ENCODE measurements at regions of chr12 and their contacts with region 1.

Region 1: DNA sequence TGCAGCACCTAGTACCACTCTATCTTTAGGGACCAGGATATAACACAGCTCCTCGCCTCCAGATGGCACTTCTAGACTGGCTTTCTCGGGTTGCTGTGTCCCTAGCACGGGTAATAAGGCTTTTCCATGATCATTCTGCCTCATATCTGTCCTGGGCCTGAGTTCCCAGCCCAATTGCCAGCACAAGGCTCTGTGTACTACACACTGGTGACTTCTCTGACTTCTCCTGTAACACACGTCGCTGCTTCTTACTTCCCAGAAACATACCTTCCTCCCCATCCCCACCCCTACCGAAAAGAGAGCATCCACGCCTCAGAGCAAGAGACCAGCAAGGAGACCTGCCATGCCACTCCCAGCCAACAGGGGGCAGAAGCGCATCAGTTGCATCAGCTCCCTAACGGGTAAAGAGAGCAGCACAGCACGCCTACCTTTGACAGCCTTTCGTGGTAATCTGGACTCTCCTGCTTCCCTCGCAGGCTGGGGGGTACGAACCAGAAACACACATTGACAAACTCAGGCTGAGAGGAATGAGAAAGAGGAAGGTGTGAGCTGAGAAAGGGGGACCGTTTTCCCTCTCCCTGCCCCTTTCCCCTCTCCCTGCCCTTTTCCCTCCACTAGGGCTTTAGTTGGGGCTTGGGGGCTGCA is 21.2 kb upstream of the ZNF740 start:
- DNase-seq: peak; percentile 97
- H3K4me3 Mint-ChIP-seq: peak overlapping the region; percentile 8
- H3K27ac Mint-ChIP-seq: peak overlapping the region; percentile 38
- H3K4me1 Mint-ChIP-seq: peaks cover 9% of the 10 kb centered on the region
- H3K27me3 Mint-ChIP-seq: no peaks in the 10 kb centered on the region

Region 2: DNA sequence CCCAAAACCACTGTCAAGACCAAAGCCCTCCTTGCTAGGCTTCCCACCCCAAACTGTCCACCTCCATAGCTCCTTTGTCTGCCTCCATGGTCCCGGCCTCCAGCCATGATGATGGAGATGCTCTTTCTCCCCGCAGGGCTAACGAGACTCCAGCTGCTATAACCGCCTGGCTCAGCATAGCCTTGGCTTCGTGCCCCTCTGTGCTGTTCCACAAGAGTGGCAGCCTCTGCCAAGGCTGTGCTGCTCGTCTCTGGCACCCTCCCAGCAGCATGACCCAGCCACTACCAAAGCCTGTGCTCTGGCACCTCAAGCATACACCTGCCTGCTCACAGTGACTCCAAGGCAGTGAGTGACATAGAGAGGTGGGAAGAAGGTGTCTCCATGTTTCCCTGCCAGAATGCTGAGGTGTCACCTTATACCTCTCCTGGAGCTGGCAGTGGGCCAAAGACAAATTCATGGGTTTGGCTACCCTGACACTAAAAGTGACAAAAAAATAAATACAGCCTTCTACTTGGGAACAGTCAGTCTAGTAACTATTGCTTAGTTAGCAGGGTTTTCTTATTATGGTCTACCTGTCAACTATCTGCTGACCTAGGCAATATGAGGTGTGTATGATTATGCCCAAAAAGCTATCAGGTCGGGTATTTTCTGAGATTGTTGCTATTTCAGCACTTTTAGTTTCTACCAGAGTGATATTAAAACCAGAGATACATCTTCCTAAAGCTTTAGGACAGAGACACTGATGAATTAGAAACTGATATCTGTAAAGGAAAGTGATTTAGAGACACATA is 524.9 kb before region 1 on chr12:
- intact Hi-C with region 1: no loop called
- DNase-seq: no peak
- H3K4me3 Mint-ChIP-seq: no peak overlapping the region
- H3K27ac Mint-ChIP-seq: peak overlapping the region; percentile 60
- H3K4me1 Mint-ChIP-seq: peaks cover 32% of the 10 kb centered on the region
- H3K27me3 Mint-ChIP-seq: peaks cover 12% of the 10 kb centered on the region

Region 3: DNA sequence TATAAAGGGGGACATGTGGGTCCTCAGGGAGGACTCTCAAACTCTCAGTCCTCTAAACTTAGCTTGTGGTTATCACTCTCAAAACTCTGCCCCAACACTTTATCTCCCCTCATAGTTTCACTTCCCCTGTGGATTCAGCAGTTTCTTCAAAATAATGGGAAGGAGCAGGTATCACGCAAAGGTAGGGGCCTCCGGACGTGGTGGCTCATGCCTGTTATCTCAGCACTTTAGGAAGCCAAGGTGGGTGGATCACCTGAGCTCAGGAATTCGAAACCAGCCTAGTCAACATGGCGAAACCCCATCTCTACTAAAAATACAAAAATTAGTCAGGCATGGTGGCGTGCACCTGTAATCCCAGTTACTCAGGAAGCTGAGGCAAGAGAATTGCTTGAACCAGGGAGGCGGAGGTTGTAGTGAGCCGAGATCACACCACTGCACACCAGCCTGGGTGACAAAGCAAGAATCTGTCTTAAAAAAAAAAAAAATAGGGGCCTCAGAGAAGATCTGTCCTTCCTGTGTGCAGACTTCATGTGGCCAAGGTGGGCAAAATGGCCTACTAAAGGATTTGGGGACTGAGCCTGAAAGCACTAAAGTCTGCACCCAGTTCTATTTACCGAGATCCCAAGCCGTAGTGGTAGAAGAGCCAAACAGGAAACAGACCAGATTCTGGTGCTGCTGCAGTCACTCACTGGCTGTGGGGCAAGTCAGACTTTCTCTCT is 41.3 kb after region 1 on chr12:
- intact Hi-C with region 1: loop called (anchors 2 kb)
- DNase-seq: peak; percentile 77
- H3K4me3 Mint-ChIP-seq: peak overlapping the region; percentile 77
- H3K27ac Mint-ChIP-seq: peak overlapping the region; percentile 85
- H3K4me1 Mint-ChIP-seq: peaks cover 53% of the 10 kb centered on the region
- H3K27me3 Mint-ChIP-seq: no peaks in the 10 kb centered on the region

Region 4: GRCh38 chr12:53251477-53252348 is 92.4 kb after region 1 on chr12:
- intact Hi-C with region 1: loop called (anchors 1 kb)
- DNase-seq: peak; percentile 94
- H3K4me3 Mint-ChIP-seq: peak overlapping the region; percentile 95
- H3K27ac Mint-ChIP-seq: peak overlapping the region; percentile 93
- H3K4me1 Mint-ChIP-seq: peaks cover 41% of the 10 kb centered on the region
- H3K27me3 Mint-ChIP-seq: no peaks in the 10 kb centered on the region

Region 5: DNA sequence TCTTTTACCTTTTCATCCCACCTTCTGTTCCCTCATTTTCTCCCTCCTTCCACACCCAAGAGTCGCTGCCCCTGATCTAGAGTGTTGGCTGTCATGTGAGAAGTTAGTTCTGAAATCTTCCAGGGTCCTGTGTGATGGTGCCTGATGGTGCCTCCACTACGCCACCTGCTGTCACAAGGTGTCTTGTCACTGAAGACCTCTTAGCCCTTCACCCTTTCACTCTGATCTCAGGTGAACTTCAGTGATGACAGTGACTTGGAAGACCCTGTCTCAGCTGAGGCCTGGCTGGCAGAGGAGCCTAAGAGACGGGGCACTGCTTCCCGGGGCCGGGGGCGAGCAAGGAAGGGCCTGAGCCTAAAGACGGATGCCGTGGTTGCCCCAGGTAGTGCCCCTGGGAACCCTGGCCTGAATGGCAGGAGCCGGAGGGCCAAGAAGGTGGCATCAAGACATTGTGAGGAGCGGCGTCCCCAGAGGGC is 128.5 kb after region 1 on chr12:
- intact Hi-C with region 1: loop called (anchors 1 kb)
- DNase-seq: peak; percentile 90
- H3K4me3 Mint-ChIP-seq: no peak overlapping the region
- H3K27ac Mint-ChIP-seq: peak overlapping the region; percentile 47
- H3K4me1 Mint-ChIP-seq: peaks cover 9% of the 10 kb centered on the region
- H3K27me3 Mint-ChIP-seq: no peaks in the 10 kb centered on the region

Region 6: DNA sequence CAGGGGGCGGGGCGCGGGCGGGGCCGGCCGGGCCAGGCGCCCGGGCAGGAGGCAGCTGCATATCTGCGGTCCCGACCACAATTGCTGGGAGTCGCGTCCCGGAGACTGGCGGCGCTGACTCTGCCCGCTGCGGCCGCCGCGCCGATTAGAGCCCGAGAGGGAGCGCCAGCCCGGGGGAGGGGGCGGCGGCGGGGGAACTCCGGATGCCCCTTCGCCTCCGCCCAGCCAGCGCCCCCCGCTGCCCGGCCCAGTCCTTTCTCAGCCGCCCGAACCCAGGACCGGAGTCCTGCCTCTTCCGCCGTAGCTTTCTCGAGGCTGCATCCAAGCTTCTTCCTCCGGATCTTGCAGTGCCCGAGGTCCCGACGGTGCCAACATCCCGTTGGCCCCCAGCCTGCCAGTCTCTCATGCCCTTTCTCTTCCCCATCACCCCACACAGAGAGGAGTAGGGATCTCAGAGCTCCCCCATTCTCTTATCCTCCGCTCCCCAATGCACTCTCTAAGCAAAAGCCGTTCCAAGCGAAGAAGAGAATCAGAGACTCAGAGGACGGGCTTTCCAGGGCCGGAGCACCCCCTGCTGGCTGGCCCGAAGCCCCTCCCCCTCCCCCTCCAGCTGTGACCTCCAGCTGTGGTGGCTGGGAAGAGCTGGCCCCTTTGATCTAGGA is 185.6 kb after region 1 on chr12:
- intact Hi-C with region 1: loop called (anchors 1 kb)
- DNase-seq: peak; percentile 89
- H3K4me3 Mint-ChIP-seq: peak overlapping the region; percentile 92
- H3K27ac Mint-ChIP-seq: peak overlapping the region; percentile 90
- H3K4me1 Mint-ChIP-seq: peaks cover 24% of the 10 kb centered on the region
- H3K27me3 Mint-ChIP-seq: peaks cover 5% of the 10 kb centered on the region

Region 7: GRCh38 chr12:53402871-53403270 is 243.6 kb after region 1 on chr12:
- intact Hi-C with region 1: no loop called
- DNase-seq: no peak
- H3K4me3 Mint-ChIP-seq: no peak overlapping the region
- H3K27ac Mint-ChIP-seq: no peak overlapping the region
- H3K4me1 Mint-ChIP-seq: peaks cover 4% of the 10 kb centered on the region
- H3K27me3 Mint-ChIP-seq: no peaks in the 10 kb centered on the region